Natural killer cell (primary cell): ENCODE measurements at regions of chr14 and their contacts with region 1.

Region 1: GRCh38 chr14:22570132-22570949 is 18.7 kb downstream of the DAD1 start:
- DNase-seq: peak; percentile 61 to 98
- ATAC-seq: peak; percentile 84 to 97 (median 88)
- H3K4me3 ChIP-seq: peak overlapping the region; percentile 25
- H3K4me3 Mint-ChIP-seq: peak overlapping the region; percentile 77
- H3K27ac ChIP-seq: peak overlapping the region; percentile 82
- H3K27ac Mint-ChIP-seq: peak overlapping the region; percentile 98 to 100
- H3K4me1 ChIP-seq: peaks cover 38% of the 10 kb centered on the region
- H3K4me1 Mint-ChIP-seq: peaks cover 51% of the 10 kb centered on the region in 2 donors
- H3K27me3 ChIP-seq: no peaks in the 10 kb centered on the region
- H3K27me3 Mint-ChIP-seq: no peaks in the 10 kb centered on the region
- CTCF ChIP-seq: peak; percentile 91

Region 2: DNA sequence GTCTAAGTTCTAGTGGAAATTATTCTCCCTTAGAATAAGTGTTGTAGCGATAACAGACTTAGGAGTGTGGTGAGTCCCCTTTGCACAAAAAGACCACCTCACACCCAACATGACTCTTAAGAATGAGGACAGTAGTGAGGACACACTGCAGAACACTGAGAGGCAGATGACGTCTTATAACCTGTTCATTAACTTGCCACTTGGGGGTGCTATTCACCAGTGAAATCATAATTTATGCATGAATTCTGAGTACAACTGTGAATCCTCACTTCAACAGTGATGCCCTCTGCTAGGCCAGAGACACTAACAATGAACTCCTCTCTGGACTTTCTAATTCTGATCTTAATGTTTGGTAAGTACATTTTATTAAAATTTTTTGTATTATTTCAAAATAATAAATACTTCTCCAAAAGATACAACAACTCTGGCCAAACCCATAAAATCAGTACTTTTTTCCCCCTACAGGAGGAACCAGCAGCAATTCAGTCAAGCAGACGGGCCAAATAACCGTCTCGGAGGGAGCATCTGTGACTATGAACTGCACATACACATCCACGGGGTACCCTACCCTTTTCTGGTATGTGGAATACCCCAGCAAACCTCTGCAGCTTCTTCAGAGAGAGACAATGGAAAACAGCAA is 256.0 kb before region 1 on chr14:
- intact Hi-C with region 1: loop called (anchors 5 kb)
- DNase-seq: peak in 1 of 2 donors; percentile 51
- ATAC-seq: peak; percentile 83 to 98 (median 94)
- H3K4me3 ChIP-seq: no peak overlapping the region
- H3K4me3 Mint-ChIP-seq: no peak overlapping the region
- H3K27ac ChIP-seq: no peak overlapping the region
- H3K27ac Mint-ChIP-seq: no peak overlapping the region
- H3K4me1 ChIP-seq: no peaks in the 10 kb centered on the region
- H3K4me1 Mint-ChIP-seq: no peaks in the 10 kb centered on the region
- H3K27me3 ChIP-seq: no peaks in the 10 kb centered on the region
- H3K27me3 Mint-ChIP-seq: peaks cover 0 to 9% of the 10 kb centered on the region in 2 donors
- CTCF ChIP-seq: peak; percentile 73

Region 3: DNA sequence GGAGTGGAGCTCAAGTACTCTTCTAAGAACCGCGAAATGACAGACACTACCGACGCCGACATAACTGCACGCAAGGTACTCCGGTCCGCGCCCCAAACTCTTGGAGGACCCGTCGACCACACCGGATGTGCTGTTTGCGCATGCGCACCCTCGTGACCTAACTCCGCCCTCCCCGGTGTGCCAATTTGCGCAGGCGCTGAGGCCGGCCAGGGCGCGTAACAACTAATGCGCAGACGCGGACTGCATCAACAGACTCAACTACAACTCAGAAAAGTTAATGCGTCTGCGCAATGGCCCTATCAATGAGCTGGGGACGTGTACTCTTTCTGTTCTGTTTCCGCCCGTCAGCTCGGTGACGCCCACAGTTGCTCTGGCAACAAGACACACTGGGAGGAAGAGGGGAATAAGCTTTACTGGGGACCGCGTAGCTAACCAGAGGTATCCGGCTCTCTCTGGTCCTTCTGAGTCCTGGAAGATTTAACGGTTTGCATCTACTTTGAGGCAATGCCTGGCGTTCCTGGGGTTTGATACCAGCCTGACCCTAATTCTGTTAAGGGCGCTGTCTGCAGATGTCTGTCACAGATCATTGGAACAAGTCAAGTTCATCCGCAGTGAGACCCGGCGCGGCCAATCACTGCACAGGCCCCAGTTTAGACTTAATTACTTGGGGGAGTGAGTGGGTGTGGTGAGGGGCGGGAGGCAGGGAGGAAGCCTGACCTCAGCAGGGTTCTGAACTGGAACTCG is 18.9 kb after region 1 on chr14 and contains the start of gene DAD1:
- intact Hi-C with region 1: loop called (anchors 1 kb)
- DNase-seq: peak; percentile 100
- ATAC-seq: peak; percentile 86 to 96 (median 90)
- H3K4me3 ChIP-seq: peak within 1 kb of the TSS; percentile 80
- H3K4me3 Mint-ChIP-seq: peak within 1 kb of the TSS; percentile 90
- H3K27ac ChIP-seq: peak within 1 kb of the TSS; percentile 97
- H3K27ac Mint-ChIP-seq: peak within 1 kb of the TSS; percentile 97 to 99
- H3K4me1 ChIP-seq: peaks cover 19% of the 10 kb centered on the region
- H3K4me1 Mint-ChIP-seq: peaks cover 45 to 47% of the 10 kb centered on the region in 2 donors
- H3K27me3 ChIP-seq: no peaks in the 10 kb centered on the region
- H3K27me3 Mint-ChIP-seq: peaks cover 13 to 17% of the 10 kb centered on the region in 2 donors
- CTCF ChIP-seq: no peak
- total RNA-seq, gene DAD1: 79.5 to 97.9 (median 92.8) TPM

Region 4: GRCh38 chr14:22766456-22767322 is 196.3 kb after region 1 on chr14 and contains the start of gene OXA1L:
- intact Hi-C with region 1: loop called (anchors 1 kb)
- DNase-seq: peak; percentile 90 to 99
- ATAC-seq: peak; percentile 92 to 95 (median 95)
- H3K4me3 ChIP-seq: peak within 1 kb of the TSS; percentile 86
- H3K4me3 Mint-ChIP-seq: peak within 1 kb of the TSS; percentile 92
- H3K27ac ChIP-seq: peak within 1 kb of the TSS; percentile 79
- H3K27ac Mint-ChIP-seq: peak within 1 kb of the TSS; percentile 93 to 94
- H3K4me1 ChIP-seq: peaks cover 14% of the 10 kb centered on the region
- H3K4me1 Mint-ChIP-seq: peaks cover 35 to 36% of the 10 kb centered on the region in 2 donors
- H3K27me3 ChIP-seq: no peaks in the 10 kb centered on the region
- H3K27me3 Mint-ChIP-seq: no peaks in the 10 kb centered on the region
- CTCF ChIP-seq: no peak
- total RNA-seq, gene OXA1L: 121 to 143 (median 125) TPM

Region 5: GRCh38 chr14:22900081-22900799 is 329.9 kb after region 1 on chr14:
- intact Hi-C with region 1: loop called (anchors 1 kb)
- DNase-seq: peak in 1 of 2 donors; percentile 86
- ATAC-seq: peak; percentile 67 to 90 (median 82)
- H3K4me3 ChIP-seq: no peak overlapping the region
- H3K4me3 Mint-ChIP-seq: no peak overlapping the region
- H3K27ac ChIP-seq: no peak overlapping the region
- H3K27ac Mint-ChIP-seq: peak overlapping the region in 1 of 2 donors; percentile 6
- H3K4me1 ChIP-seq: no peaks in the 10 kb centered on the region
- H3K4me1 Mint-ChIP-seq: peaks cover 0 to 15% of the 10 kb centered on the region in 2 donors
- H3K27me3 ChIP-seq: no peaks in the 10 kb centered on the region
- H3K27me3 Mint-ChIP-seq: no peaks in the 10 kb centered on the region
- CTCF ChIP-seq: peak; percentile 65

Region 6: GRCh38 chr14:22986508-22987054 is 416.2 kb after region 1 on chr14:
- intact Hi-C with region 1: loop called (anchors 2 kb)
- DNase-seq: peak; percentile 78 to 95
- ATAC-seq: peak; percentile 70 to 82 (median 70)
- H3K4me3 ChIP-seq: no peak overlapping the region
- H3K4me3 Mint-ChIP-seq: no peak overlapping the region
- H3K27ac ChIP-seq: no peak overlapping the region
- H3K27ac Mint-ChIP-seq: no peak overlapping the region
- H3K4me1 ChIP-seq: peaks cover 15% of the 10 kb centered on the region
- H3K4me1 Mint-ChIP-seq: no peaks in the 10 kb centered on the region
- H3K27me3 ChIP-seq: peaks cover 7% of the 10 kb centered on the region
- H3K27me3 Mint-ChIP-seq: no peaks in the 10 kb centered on the region
- CTCF ChIP-seq: peak; percentile 83